Right ventricle myocardium superior (tissue), 1 donor: ENCODE measurements at regions of chr18 and their contacts with region 1.

Region 1: GRCh38 chr18:10519999-10520935 is 5.6 kb upstream of the NAPG start:
- DNase-seq: peak; percentile 89
- ATAC-seq: peak; percentile 90

Region 2: GRCh38 chr18:9971313-9971920 is 548.9 kb before region 1 on chr18:
- intact Hi-C with region 1: loop called (anchors 1 kb)
- DNase-seq: no peak
- ATAC-seq: peak; percentile 84

Region 3: GRCh38 chr18:10032331-10033015 is 487.8 kb before region 1 on chr18:
- intact Hi-C with region 1: loop called (anchors 10 kb)
- DNase-seq: peak; percentile 51
- ATAC-seq: peak; percentile 68

Region 4: GRCh38 chr18:10285283-10285640 is 235.0 kb before region 1 on chr18:
- intact Hi-C with region 1: no loop called
- DNase-seq: no peak
- ATAC-seq: no peak

Region 5: GRCh38 chr18:10465174-10465939 is 54.9 kb before region 1 on chr18:
- intact Hi-C with region 1: no loop called
- DNase-seq: no peak
- ATAC-seq: no peak

Region 6: DNA sequence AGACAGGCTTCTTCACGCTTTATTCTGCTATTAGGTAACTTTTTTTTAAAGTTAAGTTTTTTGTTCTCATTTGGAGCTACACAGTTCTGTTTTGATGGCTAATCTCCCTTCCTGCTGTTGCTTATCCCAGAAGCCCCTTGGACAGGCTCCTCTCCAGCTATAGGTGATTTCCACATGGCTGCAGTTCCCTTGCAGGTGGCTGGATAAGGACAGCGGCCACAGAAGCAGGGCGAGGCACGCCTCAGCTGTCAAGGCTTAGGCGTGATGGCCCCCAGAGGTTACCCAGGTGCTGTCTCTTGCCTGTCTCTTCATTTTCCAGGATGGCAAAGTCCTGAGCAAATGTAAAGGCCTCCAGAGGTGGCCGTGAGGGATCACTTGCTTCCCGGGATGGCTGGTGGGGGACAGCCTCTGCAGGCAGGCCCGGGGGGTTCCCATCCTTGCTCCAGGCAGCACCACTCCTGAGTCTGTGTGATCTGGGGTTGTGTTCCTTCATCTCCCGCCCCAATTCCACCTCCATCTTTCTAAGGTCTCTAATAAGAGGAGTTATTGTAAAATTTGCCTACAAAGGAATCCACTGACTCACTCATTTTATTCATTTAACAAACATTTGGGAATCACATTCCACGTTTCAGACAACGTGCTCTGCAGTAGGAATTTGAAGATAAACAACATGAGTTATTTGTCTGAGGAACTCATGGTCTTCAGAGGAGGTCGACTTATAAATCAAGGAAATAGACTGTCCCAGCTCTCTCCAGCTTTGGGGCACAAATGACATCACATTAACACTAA is 59.0 kb after region 1 on chr18:
- intact Hi-C with region 1: no loop called
- DNase-seq: no peak
- ATAC-seq: no peak